SK-N-SH (cell line): ENCODE measurements at regions of chr19 and their contacts with region 1.

Region 1: GRCh38 chr19:58519355-58520256 is at the start of gene ZBTB45:
- DNase-seq: peak; percentile 93
- H3K4me3 ChIP-seq: peak within 1 kb of the TSS; percentile 75 to 83
- H3K27ac ChIP-seq: peak within 1 kb of the TSS; percentile 92 to 97
- H3K4me1 ChIP-seq: peaks cover 0 to 29% of the 10 kb centered on the region in 2 experiments; a peak in 1 of 4 replicates
- H3K27me3 ChIP-seq: no peaks in the 10 kb centered on the region
- CTCF ChIP-seq: peak; percentile 74
- EP300 ChIP-seq: peak; percentile 14 to 56; a peak in 2 of 4 replicates
- RAD21 ChIP-seq: peak; percentile 67
- polyA plus RNA-seq, gene ZBTB45: 7.9 and 11.3 TPM in 2 replicates

Region 2: DNA sequence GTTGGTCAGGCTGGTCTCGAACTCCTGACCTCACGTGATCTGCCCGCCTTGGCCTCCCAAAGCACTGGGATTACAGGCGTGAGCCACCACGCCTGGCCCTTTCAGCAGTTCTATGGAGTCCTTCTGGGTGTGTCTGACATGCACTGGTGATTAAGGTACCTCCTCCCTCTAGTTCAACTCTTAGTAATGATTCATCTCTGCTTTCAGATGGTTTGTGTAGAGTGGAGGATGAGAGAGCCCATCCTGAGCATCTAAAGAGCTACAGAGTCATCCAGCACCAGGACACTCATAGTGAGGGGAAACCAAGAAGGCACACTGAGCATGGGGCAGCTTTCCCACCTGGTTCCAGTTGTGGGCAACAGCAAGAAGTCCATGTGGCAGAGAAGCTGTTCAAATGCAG is 103.0 kb before region 1 on chr19:
- CTCF ChIA-PET with region 1: no interaction called
- POLR2A ChIA-PET with region 1: no interaction called
- DNase-seq: no peak
- H3K4me3 ChIP-seq: no peak overlapping the region
- H3K27ac ChIP-seq: no peak overlapping the region
- H3K4me1 ChIP-seq: no peaks in the 10 kb centered on the region
- H3K27me3 ChIP-seq: no peaks in the 10 kb centered on the region
- CTCF ChIP-seq: no peak
- EP300 ChIP-seq: no peak
- RAD21 ChIP-seq: no peak

Region 3: DNA sequence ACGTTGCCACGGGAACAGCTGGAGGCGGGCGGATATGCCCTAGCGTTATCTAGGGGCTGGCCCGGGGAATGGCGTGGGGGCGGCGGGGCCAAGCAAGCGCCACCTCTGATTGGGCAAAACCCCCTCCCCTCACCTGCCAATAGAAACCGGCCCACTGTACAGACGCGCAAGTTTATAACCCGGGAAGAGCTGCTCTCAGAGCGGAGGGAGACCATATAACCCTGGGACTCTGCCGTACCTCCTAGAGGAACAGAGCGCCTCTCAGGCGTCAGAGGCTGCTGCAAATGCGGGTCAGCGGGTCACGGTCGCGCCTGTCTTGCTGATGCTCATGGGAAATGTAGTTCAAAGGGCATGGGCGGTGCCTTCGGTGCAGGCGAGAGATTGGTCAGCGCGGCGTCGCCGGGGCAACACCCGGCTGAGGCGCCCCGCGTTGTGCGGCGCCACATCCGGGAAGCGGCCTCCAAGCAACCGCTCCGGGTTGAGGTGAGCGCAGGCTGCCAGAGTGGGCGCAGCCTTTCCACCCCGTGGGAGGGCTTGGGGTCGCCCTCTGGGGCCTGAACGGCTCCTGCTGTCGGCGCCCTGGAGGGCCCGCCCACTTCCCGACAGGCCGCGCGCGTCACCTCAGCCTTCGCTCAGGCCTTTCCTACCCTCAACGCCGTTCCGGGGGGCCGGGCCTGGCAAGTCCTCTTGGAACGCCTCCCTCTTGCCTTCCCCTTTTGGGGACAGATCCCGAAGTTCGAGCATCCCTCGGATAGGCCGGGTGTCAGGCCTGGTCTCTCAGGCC is 43.7 kb before region 1 on chr19 and contains the start of gene ZNF446:
- CTCF ChIA-PET with region 1: interaction called, 22 read pairs
- POLR2A ChIA-PET with region 1: no interaction called
- DNase-seq: peak; percentile 94
- H3K4me3 ChIP-seq: peak within 1 kb of the TSS; percentile 67 to 85
- H3K27ac ChIP-seq: peak within 1 kb of the TSS; percentile 90 to 97
- H3K4me1 ChIP-seq: peaks cover 0 to 30% of the 10 kb centered on the region in 2 experiments; a peak in 1 of 4 replicates
- H3K27me3 ChIP-seq: no peaks in the 10 kb centered on the region
- CTCF ChIP-seq: no peak; the same call in 1 of the 2 replicates
- EP300 ChIP-seq: no peak
- RAD21 ChIP-seq: no peak
- polyA plus RNA-seq, gene ZNF446: 6.9 and 7.0 TPM in 2 replicates

Region 4: DNA sequence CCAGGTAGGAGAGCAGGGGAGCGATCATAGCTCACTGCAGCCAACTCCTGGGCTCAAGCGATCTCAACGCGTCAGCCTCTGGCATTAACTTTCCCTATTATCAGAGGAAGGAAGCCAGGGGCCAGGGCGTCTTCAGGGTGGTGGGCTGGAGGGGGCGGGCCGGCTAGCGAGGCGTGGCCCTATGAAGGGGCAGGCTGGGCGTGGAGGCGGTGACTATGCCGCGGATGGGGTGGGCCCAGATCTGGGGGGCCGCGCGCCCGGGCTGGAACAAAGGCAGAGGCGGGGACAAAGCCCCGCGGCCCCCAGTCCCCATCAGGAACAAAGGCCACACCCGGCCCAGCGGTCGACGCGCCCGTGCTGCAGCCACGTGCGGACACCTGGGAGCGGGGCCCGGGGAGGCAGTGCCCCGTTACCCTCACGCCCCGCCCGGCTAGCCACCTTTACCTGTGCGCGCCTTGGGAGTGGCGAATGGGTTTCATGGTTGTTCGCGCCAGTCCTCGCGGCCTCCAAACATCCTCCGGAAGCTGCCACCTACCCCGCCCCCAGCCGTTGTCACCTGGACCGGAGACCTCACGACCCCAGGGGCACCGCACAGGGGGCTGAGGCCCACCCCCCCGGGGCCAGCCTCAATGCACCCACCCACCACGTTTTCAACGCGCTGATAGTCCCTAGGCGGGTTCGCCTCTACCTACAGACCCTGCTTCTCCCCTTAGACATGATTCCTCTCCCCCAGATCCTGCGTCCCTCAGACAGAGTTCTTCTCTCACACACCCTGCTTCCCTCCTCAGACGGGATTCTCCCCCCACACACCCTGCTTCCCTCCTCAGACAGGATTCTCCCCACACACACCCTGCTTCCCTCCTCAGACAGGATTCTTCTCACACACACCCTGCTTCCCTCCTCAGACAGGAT is 18.9 kb after region 1 on chr19:
- CTCF ChIA-PET with region 1: interaction called, 29 read pairs
- POLR2A ChIA-PET with region 1: interaction called, 45 read pairs
- DNase-seq: no peak
- H3K4me3 ChIP-seq: no peak overlapping the region
- H3K27ac ChIP-seq: no peak overlapping the region
- H3K4me1 ChIP-seq: no peaks in the 10 kb centered on the region
- H3K27me3 ChIP-seq: no peaks in the 10 kb centered on the region; the same call in 1 of the 2 replicates
- CTCF ChIP-seq: no peak
- EP300 ChIP-seq: no peak
- RAD21 ChIP-seq: no peak

Region 5: GRCh38 chr19:58558623-58559274 is 39.1 kb after region 1 on chr19:
- CTCF ChIA-PET with region 1: interaction called, 81 read pairs
- POLR2A ChIA-PET with region 1: interaction called, 49 read pairs
- DNase-seq: peak; percentile 91
- H3K4me3 ChIP-seq: peak overlapping the region; percentile 91 to 96
- H3K27ac ChIP-seq: peak overlapping the region; percentile 99 to 100
- H3K4me1 ChIP-seq: peaks cover 20 to 71% of the 10 kb centered on the region in 2 experiments; a peak in 3 of 4 replicates
- H3K27me3 ChIP-seq: no peaks in the 10 kb centered on the region
- CTCF ChIP-seq: no peak
- EP300 ChIP-seq: no peak
- RAD21 ChIP-seq: no peak